ENCODE measurements at regions of chr1 and their contacts with region 1.

Region 1: DNA sequence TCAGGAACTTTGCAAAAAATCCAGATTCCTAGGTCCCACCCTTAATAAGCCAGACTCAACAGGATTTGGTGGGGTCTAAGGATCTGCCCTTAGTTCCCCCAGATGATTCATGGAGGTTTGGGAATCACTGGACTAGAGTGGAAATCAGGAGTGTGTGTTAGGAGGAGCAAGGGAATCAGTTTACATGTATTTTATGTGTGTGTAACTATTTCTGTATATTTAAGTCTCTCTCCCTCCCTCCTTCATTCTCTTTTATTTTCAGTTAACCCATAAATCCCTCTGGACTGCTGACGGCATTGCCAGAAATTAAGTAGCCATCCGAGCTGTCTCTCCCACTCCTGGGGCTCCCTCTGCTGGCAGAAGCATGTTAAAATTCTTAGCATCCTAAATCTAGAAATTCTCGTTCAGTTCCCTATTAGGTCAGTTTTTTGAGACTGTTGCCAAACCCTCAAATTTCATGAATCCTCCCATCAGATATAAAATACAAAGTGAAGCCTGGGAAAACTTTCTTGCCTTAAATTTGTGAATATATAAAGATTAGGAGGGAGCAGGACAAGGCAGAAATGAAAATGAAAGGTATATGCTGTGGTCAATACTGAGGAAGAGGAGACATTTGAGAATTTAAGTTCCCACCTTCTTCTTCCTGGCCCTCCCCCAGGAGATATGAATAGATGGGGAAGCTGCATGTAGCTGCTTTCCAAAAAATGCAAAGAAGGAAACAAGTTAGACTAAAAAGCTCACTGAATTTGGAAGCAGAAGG is 11.7 kb upstream of the HSD11B1 start:
- DNase-seq: peak; percentile 80

Region 2: DNA sequence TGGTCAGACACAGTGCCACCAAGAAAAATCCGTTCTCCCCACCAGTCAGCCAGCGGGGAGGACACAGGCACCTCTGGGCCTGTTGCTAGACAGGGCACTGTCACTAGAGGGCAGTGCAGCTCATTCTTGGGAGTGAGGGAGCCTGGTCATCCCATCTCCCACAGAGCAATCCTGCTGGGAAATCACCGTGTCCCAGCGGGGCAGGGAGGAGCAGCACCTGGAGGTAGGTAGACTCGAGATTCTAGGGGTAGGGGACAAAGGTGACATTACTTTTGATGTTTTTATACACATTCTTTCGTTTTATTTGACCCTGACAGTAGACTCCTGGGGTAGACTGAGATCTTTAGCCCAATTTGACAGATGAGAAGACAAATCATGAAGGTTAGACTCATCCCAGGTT is 116.1 kb before region 1 on chr1:
- in situ Hi-C with region 1: loop called (anchors 25 kb)
- DNase-seq: peak; percentile 77

Measured in ACHN (cell line).